Mammary epithelial cell (primary cell): ENCODE measurements at regions of chr12 and their contacts with region 1.

Region 1: GRCh38 chr12:16939871-16940306 is 333.9 kb upstream of the LMO3 start:
- DNase-seq: peak; percentile 71
- H3K4me3 ChIP-seq: no peak overlapping the region
- H3K27ac ChIP-seq: no peak overlapping the region
- H3K4me1 ChIP-seq: no peaks in the 10 kb centered on the region
- H3K27me3 ChIP-seq: no peaks in the 10 kb centered on the region
- CTCF ChIP-seq: peak; percentile 98 to 100

Region 2: GRCh38 chr12:16385782-16386646 is 553.9 kb before region 1 on chr12:
- CTCF ChIA-PET with region 1: no interaction called
- dilution Hi-C with region 1: no loop called
- in situ Hi-C with region 1: no loop called
- intact Hi-C with region 1: loop called (anchors 5 kb)
- DNase-seq: peak; percentile 44
- H3K4me3 ChIP-seq: no peak overlapping the region
- H3K27ac ChIP-seq: no peak overlapping the region
- H3K4me1 ChIP-seq: peaks cover 9% of the 10 kb centered on the region
- H3K27me3 ChIP-seq: no peaks in the 10 kb centered on the region
- CTCF ChIP-seq: peak; percentile 26 to 64

Region 3: DNA sequence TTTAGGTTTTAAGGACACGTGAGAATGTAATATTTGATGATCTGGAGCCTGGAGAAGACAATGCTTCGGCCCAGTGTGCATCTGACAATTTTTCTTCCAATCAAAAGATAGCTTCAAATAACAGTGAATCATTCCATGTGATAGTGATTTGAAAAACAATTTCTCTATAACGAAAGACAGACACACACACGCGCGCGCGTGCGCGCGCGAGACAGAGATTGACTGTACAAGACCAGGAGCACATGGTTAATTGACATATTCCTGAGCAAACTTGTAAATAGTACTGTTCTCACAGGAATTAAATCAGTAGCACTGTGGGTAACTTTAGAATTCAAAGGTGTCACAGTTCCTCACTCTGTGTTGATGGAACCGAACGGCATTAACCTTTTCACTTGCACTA is 46.5 kb before region 1 on chr12:
- CTCF ChIA-PET with region 1: no interaction called
- dilution Hi-C with region 1: no loop called
- in situ Hi-C with region 1: no loop called
- intact Hi-C with region 1: no loop called
- DNase-seq: no peak
- H3K4me3 ChIP-seq: no peak overlapping the region
- H3K27ac ChIP-seq: no peak overlapping the region
- H3K4me1 ChIP-seq: peaks cover 3% of the 10 kb centered on the region
- H3K27me3 ChIP-seq: no peaks in the 10 kb centered on the region
- CTCF ChIP-seq: no peak

Region 4: DNA sequence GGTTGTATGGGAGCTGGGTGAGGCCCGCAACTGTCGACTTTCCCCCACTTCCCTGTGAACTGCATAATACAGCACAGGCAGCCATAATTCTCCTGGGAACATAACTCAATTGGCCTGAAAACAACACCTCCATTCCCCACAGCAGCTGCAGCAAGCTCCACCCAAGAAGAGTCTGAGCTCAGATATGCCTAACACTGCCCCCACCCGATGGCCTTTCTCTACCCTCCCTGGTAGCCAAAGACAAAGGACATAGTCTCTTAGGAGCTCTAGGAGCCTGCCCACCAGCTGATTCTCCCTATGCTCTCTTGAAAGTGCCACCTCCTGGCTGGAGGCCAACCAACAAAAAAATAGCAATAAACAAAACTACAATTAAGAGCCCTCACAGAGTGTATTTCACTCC is 208.8 kb after region 1 on chr12:
- CTCF ChIA-PET with region 1: no interaction called
- dilution Hi-C with region 1: no loop called
- in situ Hi-C with region 1: no loop called
- intact Hi-C with region 1: no loop called
- DNase-seq: no peak
- H3K4me3 ChIP-seq: no peak overlapping the region
- H3K27ac ChIP-seq: no peak overlapping the region
- H3K4me1 ChIP-seq: no peaks in the 10 kb centered on the region
- H3K27me3 ChIP-seq: no peaks in the 10 kb centered on the region
- CTCF ChIP-seq: no peak

Region 5: DNA sequence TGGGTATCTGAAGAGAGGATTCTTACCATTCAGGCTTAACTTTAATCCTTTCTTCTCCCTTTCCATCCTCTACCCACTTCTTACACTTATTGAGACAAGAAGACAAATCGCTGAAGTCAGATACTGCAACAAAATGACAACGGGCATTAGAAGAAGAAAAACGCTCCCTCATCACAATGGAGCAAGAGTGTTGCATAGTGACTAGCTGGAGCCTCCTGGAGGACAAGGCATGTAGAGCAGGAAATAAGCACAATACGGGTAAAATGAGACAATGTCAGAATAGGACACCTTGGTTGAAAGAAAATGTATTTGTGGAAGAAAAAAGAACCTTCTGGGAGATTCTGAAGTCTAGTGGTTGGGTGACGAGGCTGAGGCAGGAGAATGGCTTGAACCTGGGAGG is 649.1 kb after region 1 on chr12:
- CTCF ChIA-PET with region 1: no interaction called
- dilution Hi-C with region 1: no loop called
- in situ Hi-C with region 1: loop called in 1 of 2 experiments (anchors 25 kb)
- intact Hi-C with region 1: loop called (anchors 1 kb)
- DNase-seq: peak; percentile 13
- H3K4me3 ChIP-seq: no peak overlapping the region
- H3K27ac ChIP-seq: no peak overlapping the region
- H3K4me1 ChIP-seq: no peaks in the 10 kb centered on the region
- H3K27me3 ChIP-seq: peaks cover 2% of the 10 kb centered on the region
- CTCF ChIP-seq: peak; percentile 69 to 84

Region 6: GRCh38 chr12:17918013-17918412 is 978.1 kb after region 1 on chr12:
- CTCF ChIA-PET with region 1: interaction called, 3 read pairs
- dilution Hi-C with region 1: no loop called
- in situ Hi-C with region 1: loop called in 1 of 2 experiments (anchors 25 kb)
- intact Hi-C with region 1: no loop called
- DNase-seq: no peak
- H3K4me3 ChIP-seq: no peak overlapping the region
- H3K27ac ChIP-seq: no peak overlapping the region
- H3K4me1 ChIP-seq: peaks cover 3% of the 10 kb centered on the region
- H3K27me3 ChIP-seq: no peaks in the 10 kb centered on the region
- CTCF ChIP-seq: no peak

Region 7: GRCh38 chr12:17976202-17976601 is 1036.3 kb after region 1 on chr12:
- CTCF ChIA-PET with region 1: no interaction called
- dilution Hi-C with region 1: no loop called
- in situ Hi-C with region 1: loop called in 1 of 2 experiments (anchors 25 kb)
- intact Hi-C with region 1: loop called (anchors 1 kb)
- DNase-seq: peak; percentile 17
- H3K4me3 ChIP-seq: no peak overlapping the region
- H3K27ac ChIP-seq: no peak overlapping the region
- H3K4me1 ChIP-seq: no peaks in the 10 kb centered on the region
- H3K27me3 ChIP-seq: no peaks in the 10 kb centered on the region
- CTCF ChIP-seq: peak; percentile 44 to 71

Region 8: DNA sequence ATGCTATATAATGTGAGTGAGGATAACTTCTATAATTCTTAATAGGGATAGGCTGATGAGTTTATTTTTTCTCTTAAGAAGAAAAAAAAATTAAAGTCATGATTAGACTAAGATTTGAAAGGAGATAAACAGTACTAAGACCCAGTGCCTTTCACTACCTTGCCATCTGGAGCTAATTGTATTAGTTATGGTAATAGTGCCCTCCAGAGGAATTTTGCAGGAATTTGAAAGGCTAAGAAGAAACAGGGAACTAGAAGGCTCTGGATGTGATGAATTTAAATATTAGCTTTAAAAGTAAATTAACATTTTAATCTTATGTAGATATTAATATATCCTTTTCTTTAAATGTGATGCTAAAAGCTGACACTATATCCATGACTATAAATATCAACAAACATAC is 1284.9 kb after region 1 on chr12:
- CTCF ChIA-PET with region 1: no interaction called
- dilution Hi-C with region 1: no loop called
- in situ Hi-C with region 1: no loop called
- intact Hi-C with region 1: loop called (anchors 10 kb)
- DNase-seq: peak; percentile 34
- H3K4me3 ChIP-seq: no peak overlapping the region
- H3K27ac ChIP-seq: no peak overlapping the region
- H3K4me1 ChIP-seq: no peaks in the 10 kb centered on the region
- H3K27me3 ChIP-seq: no peaks in the 10 kb centered on the region
- CTCF ChIP-seq: peak; percentile 52 to 63